Calu3 (cell line): ENCODE measurements at regions of chr11 and their contacts with region 1.

Region 1: GRCh38 chr11:60265373-60266214 is 14.9 kb upstream of the MS4A4A start:
- DNase-seq: peak; percentile 61
- H3K4me3 Mint-ChIP-seq: no peak overlapping the region
- H3K27ac Mint-ChIP-seq: no peak overlapping the region
- H3K4me1 Mint-ChIP-seq: no peaks in the 10 kb centered on the region
- H3K27me3 Mint-ChIP-seq: peaks cover 13% of the 10 kb centered on the region
- CTCF ChIP-seq: peak; percentile 72

Region 2: GRCh38 chr11:60230681-60231080 is 34.9 kb before region 1 on chr11:
- CTCF ChIA-PET with region 1: no interaction called
- intact Hi-C with region 1: no loop called
- DNase-seq: no peak
- H3K4me3 Mint-ChIP-seq: no peak overlapping the region
- H3K27ac Mint-ChIP-seq: no peak overlapping the region
- H3K4me1 Mint-ChIP-seq: no peaks in the 10 kb centered on the region
- H3K27me3 Mint-ChIP-seq: no peaks in the 10 kb centered on the region
- CTCF ChIP-seq: no peak

Region 3: GRCh38 chr11:60280412-60280811 is 14.8 kb after region 1 on chr11 and contains the start of gene MS4A4A:
- CTCF ChIA-PET with region 1: no interaction called
- intact Hi-C with region 1: no loop called
- DNase-seq: no peak
- H3K4me3 Mint-ChIP-seq: no peak within 1 kb of the TSS
- H3K27ac Mint-ChIP-seq: no peak within 1 kb of the TSS
- H3K4me1 Mint-ChIP-seq: peaks cover 3% of the 10 kb centered on the region
- H3K27me3 Mint-ChIP-seq: no peaks in the 10 kb centered on the region
- CTCF ChIP-seq: no peak
- total RNA-seq, gene MS4A4A: not detected in 2 replicates

Region 4: GRCh38 chr11:60334005-60334620 is 68.5 kb after region 1 on chr11:
- CTCF ChIA-PET with region 1: no interaction called
- intact Hi-C with region 1: loop called (anchors 2 kb)
- DNase-seq: peak; percentile 89
- H3K4me3 Mint-ChIP-seq: no peak overlapping the region
- H3K27ac Mint-ChIP-seq: no peak overlapping the region
- H3K4me1 Mint-ChIP-seq: no peaks in the 10 kb centered on the region
- H3K27me3 Mint-ChIP-seq: no peaks in the 10 kb centered on the region
- CTCF ChIP-seq: peak; percentile 70

Region 5: DNA sequence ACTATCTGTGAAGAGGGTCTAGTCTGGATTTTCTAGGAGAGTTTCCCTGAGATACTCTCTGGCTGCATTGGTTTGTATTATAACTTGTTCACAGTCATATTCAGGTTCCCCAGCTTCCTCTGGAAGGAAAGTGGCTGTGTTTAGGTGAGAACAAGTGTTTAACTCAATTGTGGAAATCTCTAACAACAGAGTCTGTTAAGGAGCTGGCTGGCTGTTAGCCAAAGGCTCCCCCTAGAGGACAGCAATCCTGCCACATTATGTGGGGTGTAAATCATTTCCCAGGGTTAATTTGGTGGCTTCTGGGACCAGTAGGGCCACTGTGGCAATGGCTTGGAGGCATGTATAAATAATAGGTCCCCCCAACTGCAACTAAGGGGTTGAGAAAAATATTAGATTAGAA is 79.9 kb after region 1 on chr11:
- CTCF ChIA-PET with region 1: interaction called, 10 read pairs
- intact Hi-C with region 1: loop called (anchors 1 kb)
- DNase-seq: peak; percentile 63
- H3K4me3 Mint-ChIP-seq: no peak overlapping the region
- H3K27ac Mint-ChIP-seq: no peak overlapping the region
- H3K4me1 Mint-ChIP-seq: no peaks in the 10 kb centered on the region
- H3K27me3 Mint-ChIP-seq: peaks cover 35% of the 10 kb centered on the region
- CTCF ChIP-seq: peak; percentile 56

Region 6: DNA sequence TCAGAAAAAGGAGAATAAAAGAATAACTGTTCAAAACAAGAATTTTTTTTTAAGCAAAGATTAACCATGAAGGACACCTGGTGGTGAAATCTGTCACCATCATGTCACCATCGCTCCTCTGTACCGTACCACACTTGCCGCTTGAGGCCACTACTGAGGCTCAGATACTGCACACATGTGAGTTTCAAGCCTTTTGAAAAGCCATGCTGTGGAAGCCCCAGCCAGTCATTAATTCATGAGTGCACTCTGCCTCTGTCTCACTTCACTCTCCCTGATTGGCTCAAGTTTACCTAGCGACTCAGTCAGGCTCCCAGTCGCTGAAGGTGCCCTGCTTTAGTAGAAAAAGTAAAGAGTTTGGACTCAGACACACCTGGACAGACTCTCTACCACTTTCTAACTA is 220.4 kb after region 1 on chr11:
- CTCF ChIA-PET with region 1: no interaction called
- intact Hi-C with region 1: loop called (anchors 2 kb)
- DNase-seq: peak; percentile 67
- H3K4me3 Mint-ChIP-seq: no peak overlapping the region
- H3K27ac Mint-ChIP-seq: no peak overlapping the region
- H3K4me1 Mint-ChIP-seq: no peaks in the 10 kb centered on the region
- H3K27me3 Mint-ChIP-seq: no peaks in the 10 kb centered on the region
- CTCF ChIP-seq: peak; percentile 82